ENCODE measurements at regions of chr14 and their contacts with region 1.

Region 1: DNA sequence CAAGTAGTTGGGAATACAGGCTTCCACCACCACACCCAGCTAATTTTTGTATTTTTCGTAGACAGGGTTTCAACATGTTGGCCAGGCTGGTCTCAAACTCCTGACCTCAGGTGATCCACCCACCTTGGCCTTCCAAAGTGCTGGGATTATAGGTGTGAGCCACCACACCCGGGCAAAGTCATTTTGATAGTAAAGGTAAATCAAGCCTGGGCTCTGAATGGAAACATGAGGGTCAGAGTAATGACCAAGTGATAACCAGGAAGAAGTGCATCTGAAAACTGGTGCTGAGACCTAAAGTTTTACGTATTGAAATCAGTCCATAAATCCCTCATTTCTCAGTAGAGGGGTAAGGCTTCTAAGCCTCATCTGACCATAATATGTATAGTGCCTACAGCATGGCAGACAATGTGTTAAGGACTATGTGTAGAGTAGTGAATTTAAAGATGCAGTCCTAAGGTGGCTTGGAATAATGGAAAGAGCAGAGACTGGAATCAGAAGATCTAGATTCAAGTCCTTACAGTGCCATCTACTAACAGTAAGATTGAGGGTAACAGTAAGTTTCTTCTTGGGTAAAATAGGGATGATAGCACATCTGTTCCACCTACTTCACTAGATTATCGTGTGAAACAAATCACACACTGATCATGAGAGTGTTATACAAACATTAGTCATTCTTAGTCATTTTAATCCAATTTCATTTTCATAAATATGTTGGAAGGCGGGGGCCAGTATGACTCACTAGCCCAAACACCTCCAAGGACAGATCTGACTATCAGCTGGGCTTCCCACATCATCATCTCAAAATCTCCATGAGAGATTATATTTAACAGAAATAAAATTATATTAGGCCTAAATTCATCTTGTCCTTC is 11.2 kb downstream of the MAP4K5 start:
- DNase-seq: peak; percentile 84
- ATAC-seq: peak; percentile 81
- H3K4me3 Mint-ChIP-seq: peak overlapping the region; percentile 55
- H3K27ac Mint-ChIP-seq: peak overlapping the region; percentile 94
- H3K4me1 Mint-ChIP-seq: peaks cover 56% of the 10 kb centered on the region
- H3K27me3 Mint-ChIP-seq: no peaks in the 10 kb centered on the region

Region 2: DNA sequence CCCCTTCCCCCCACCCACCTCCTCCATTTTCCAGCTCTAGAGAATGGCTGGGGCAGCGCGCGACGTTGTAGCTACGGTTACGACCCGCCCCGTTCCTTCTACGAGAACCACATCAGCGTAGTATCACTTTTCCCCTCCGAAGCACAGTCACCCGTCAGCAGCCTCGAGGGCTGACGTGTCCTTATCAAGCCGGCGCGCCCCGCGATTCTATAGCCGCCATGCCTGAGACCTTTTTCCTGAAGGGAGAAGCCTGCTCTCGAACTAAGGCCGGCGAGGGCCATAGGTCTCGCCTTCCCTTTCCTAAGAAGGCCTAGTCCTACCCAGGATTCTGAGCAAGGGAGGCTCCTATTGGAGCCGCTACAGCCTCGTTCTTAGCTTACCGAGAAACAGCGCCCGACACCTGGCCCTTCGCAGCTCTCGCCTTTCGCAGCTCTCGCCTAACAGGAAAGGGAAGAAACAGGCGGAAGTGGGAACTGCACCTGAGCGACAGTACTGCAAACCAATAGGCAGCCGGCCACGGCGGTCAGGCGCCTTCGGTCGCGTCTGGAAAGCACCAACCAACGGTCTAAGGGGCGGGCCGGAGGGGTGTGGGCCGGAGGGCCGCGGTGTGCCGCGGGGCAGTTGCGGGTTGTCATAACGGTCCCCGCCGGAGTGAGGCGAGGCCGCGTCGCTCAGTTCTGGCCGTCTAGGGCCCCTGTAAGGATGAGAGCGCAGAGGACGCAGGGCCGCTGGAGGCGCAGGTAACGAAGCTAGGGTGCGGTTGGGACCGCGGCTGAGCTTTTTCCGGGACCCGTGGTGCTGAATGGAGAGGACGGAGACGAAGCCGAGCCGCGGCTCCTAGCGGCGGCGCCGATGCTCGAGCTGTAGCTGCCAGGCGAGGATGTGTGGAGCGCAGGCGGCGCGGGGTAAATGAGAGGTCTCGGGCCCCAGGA is 900.7 kb before region 1 on chr14 and contains the starts of genes MGAT2 and RPL36AL:
- CTCF ChIA-PET with region 1: no interaction called
- POLR2A ChIA-PET with region 1: no interaction called
- intact Hi-C with region 1: loop called in 1 of 2 experiments (anchors 5 kb)
- DNase-seq: peak; percentile 97
- ATAC-seq: peak; percentile 90
- H3K4me3 Mint-ChIP-seq: peak within 1 kb of the TSS; percentile 93
- H3K27ac Mint-ChIP-seq: peak within 1 kb of the TSS; percentile 97
- H3K4me1 Mint-ChIP-seq: peaks cover 51% of the 10 kb centered on the region
- H3K27me3 Mint-ChIP-seq: no peaks in the 10 kb centered on the region
- total RNA-seq, gene MGAT2: 23.8 to 32.2 TPM
- total RNA-seq, gene RPL36AL: 272 to 309 TPM

Region 3: GRCh38 chr14:50342221-50343078 is 178.7 kb before region 1 on chr14:
- CTCF ChIA-PET with region 1: interaction called, 3 read pairs
- POLR2A ChIA-PET with region 1: interaction called, 4 read pairs
- intact Hi-C with region 1: loop called (anchors 1 kb)
- DNase-seq: peak; percentile 76
- ATAC-seq: no peak
- H3K4me3 Mint-ChIP-seq: no peak overlapping the region
- H3K27ac Mint-ChIP-seq: no peak overlapping the region
- H3K4me1 Mint-ChIP-seq: peaks cover 30% of the 10 kb centered on the region
- H3K27me3 Mint-ChIP-seq: peaks cover 3% of the 10 kb centered on the region

Region 4: DNA sequence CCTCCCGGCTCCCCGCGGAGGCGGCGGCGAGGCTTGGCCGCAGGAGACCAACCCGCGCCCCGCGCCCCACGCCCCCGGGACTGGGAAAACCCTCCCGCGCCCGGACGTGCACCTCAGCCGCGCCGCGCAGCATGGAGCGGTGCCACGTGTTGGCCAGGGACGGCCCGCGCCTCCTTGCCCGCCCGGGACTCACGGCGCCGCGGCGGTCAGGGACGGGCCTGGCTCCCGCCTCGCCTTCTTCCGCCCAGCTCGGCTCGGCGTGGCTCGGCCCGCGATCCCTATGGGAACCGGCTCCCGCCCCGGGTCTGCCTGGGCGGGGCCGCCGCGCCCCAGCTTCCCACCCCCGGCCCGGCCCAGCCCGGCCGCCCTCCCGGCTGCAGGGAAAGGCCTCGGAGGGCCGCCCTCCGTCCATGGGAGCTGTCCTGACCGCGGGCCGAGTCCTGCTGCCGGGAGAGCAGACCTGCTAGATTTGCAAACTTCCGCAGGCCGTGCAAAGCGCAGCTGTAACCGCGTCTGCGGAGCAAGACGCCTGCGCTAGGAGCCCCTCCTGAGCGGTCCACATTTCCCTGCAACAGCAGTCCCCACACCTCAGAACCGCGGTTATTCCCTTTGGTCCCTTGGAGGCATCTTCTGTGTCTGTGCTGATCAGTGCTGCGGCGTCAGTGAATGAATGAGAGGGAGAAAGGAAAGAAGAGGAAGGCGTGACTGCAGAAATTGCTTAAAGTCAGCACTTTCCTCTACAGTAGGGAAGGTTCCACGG is 124.4 kb before region 1 on chr14 and contains the start of gene CDKL1:
- CTCF ChIA-PET with region 1: no interaction called
- POLR2A ChIA-PET with region 1: no interaction called
- intact Hi-C with region 1: loop called in 1 of 2 experiments (anchors 2 kb)
- DNase-seq: peak; percentile 70
- ATAC-seq: peak; percentile 75
- H3K4me3 Mint-ChIP-seq: peak within 1 kb of the TSS; percentile 82
- H3K27ac Mint-ChIP-seq: peak within 1 kb of the TSS; percentile 72
- H3K4me1 Mint-ChIP-seq: peaks cover 14% of the 10 kb centered on the region
- H3K27me3 Mint-ChIP-seq: peaks cover 6% of the 10 kb centered on the region
- total RNA-seq, gene CDKL1: 2.9 to 4.4 TPM

Region 5: DNA sequence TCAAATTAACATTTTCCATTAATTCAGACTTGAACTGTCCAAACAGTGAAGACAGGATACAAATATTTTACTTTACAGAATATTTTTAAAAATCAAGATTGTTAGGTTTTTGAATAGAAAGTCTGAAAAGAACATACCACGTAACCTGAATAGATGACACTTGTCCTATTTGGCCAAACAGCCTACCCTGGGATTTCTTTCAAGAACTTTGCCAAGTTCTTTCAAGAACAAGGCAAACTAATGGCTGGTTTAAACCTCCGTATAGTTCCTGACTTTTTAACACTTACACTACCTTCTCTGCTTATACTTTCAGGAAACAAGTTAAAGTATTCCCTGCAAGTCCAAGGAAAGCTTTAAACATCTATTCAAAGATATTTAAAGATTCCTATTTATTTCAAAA is 23.8 kb before region 1 on chr14:
- CTCF ChIA-PET with region 1: no interaction called
- POLR2A ChIA-PET with region 1: no interaction called
- intact Hi-C with region 1: no loop called
- DNase-seq: no peak
- ATAC-seq: no peak
- H3K4me3 Mint-ChIP-seq: no peak overlapping the region
- H3K27ac Mint-ChIP-seq: no peak overlapping the region
- H3K4me1 Mint-ChIP-seq: peaks cover 13% of the 10 kb centered on the region
- H3K27me3 Mint-ChIP-seq: no peaks in the 10 kb centered on the region

Region 6: GRCh38 chr14:50532502-50533240 is 11.5 kb after region 1 on chr14 and contains the start of gene MAP4K5:
- CTCF ChIA-PET with region 1: interaction called, 8 read pairs
- POLR2A ChIA-PET with region 1: no interaction called
- intact Hi-C with region 1: loop called (anchors 1 kb)
- DNase-seq: peak; percentile 94
- ATAC-seq: peak; percentile 96
- H3K4me3 Mint-ChIP-seq: peak within 1 kb of the TSS; percentile 90
- H3K27ac Mint-ChIP-seq: peak within 1 kb of the TSS; percentile 86
- H3K4me1 Mint-ChIP-seq: peaks cover 47% of the 10 kb centered on the region
- H3K27me3 Mint-ChIP-seq: no peaks in the 10 kb centered on the region
- total RNA-seq, gene MAP4K5: 19.1 to 31.2 TPM

Measured in activated CD4-positive, alpha-beta T cell treated with anti-CD3 and anti-CD28 coated beads for 36 hours (primary cell).